ENCODE measurements at regions of chr7 and their contacts with region 1.

Region 1: GRCh38 chr7:28408960-28409715 is 3.2 kb upstream of the CREB5 start:
- DNase-seq: peak; percentile 95
- H3K4me3 Mint-ChIP-seq: peak overlapping the region; percentile 79
- H3K27ac Mint-ChIP-seq: peak overlapping the region; percentile 90
- H3K4me1 Mint-ChIP-seq: peaks cover 35% of the 10 kb centered on the region
- H3K27me3 Mint-ChIP-seq: peaks cover 13% of the 10 kb centered on the region
- CTCF ChIP-seq: no peak

Region 2: DNA sequence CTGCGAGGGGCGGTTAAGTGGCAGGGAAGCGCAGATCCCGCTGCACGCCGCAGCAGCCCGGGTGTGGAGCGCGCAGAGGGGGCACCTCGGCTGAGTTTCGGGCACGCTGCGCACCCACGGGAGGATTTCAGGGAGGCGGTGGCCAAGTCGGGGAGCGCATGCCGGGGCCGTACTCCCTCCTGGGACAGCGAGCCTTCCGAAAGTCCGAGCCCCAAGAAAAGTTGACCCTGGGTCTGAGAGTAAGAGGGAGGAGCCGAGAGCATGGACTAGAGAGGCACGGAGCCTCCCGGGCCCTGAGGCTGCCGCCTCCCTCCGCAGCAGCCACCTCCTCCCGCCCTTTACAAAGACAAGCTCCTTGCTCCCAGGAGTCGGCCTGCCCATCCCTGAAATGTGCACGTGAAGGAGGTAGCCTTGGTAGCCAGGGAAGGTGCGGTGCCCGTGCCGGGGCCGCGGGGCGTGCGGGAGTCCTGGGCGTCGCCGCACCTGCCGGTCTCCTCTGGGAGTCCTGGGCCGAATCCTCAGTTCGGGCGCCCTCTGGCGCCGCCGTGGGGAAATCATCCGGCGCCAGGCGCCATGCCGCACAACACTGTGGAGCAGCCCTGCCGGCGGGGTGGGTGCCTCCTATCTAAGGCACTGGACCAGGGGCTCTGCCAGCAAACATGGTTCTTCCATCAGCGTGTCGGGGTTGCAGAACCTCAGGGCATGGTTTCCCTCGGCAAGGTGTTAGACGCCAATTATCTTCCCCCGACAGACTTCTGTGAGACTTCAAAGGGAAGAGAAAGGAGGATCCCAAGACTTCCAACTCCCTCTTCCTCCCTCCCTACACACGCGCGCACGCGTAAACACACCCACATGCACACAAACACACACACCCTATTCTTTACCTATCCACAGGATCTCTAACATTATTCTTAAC is 445.0 kb after region 1 on chr7:
- CTCF ChIA-PET with region 1: no interaction called
- POLR2A ChIA-PET with region 1: interaction called, 4 read pairs
- intact Hi-C with region 1: loop called (anchors 5 kb)
- DNase-seq: peak; percentile 74
- H3K4me3 Mint-ChIP-seq: peak overlapping the region; percentile 66
- H3K27ac Mint-ChIP-seq: no peak overlapping the region
- H3K4me1 Mint-ChIP-seq: peaks cover 19% of the 10 kb centered on the region
- H3K27me3 Mint-ChIP-seq: no peaks in the 10 kb centered on the region
- CTCF ChIP-seq: peak; percentile 92

Region 3: GRCh38 chr7:28865601-28866144 is 456.5 kb after region 1 on chr7:
- CTCF ChIA-PET with region 1: no interaction called
- POLR2A ChIA-PET with region 1: no interaction called
- intact Hi-C with region 1: no loop called
- DNase-seq: no peak
- H3K4me3 Mint-ChIP-seq: no peak overlapping the region
- H3K27ac Mint-ChIP-seq: no peak overlapping the region
- H3K4me1 Mint-ChIP-seq: no peaks in the 10 kb centered on the region
- H3K27me3 Mint-ChIP-seq: no peaks in the 10 kb centered on the region
- CTCF ChIP-seq: no peak